Naive thymus-derived CD4-positive, alpha-beta T cell (primary cell): ENCODE measurements at regions of chr10 and their contacts with region 1.

Region 1: DNA sequence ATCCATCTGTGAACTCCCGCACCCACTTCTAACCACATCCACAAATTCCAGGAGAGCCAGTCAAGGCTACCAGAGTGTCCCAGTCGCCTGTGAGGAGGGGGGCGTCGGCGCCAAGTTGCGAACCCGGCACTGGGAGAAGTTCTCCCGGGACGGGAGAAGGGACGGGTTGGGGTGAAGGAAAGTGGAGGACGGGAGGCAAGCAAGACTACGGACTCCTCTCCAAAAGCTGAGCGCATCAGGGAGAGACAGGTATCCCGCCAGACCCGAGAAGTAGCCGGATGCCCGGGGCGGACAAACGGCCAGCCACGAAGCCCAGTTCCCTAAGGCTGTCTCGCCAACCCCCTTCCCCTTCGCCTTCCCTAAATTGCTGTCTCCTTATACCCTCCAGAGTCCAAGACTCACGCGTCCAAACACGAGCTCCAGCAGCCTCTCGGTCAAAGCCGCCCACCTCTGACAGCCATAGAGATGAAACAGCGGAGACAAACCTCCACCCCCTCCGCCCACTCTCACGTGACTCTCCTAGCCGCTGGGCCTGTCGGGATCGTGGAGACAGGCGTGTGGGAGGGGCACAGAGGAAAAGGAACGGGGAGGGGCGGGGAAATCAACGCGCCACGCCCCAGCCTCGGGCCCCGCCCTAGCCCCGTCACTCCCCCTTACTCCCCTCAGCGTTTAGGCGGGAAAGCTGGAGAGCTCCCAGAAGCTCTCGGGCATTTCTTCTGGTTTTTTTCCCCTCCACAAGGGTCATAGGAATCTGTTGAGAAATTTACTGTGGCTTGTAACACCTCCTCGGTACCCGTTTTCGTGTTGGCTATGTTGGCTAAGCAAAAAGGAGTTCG is at the start of gene MICU1:
- DNase-seq: peak; percentile 74 to 93 (median 90)
- ATAC-seq: peak; percentile 100
- H3K4me3 ChIP-seq: peak within 1 kb of the TSS; percentile 97
- H3K4me3 Mint-ChIP-seq: peak within 1 kb of the TSS; percentile 97 to 100 (median 100)
- H3K27ac ChIP-seq: peak within 1 kb of the TSS; percentile 76
- H3K27ac Mint-ChIP-seq: peak within 1 kb of the TSS; percentile 83 to 99 (median 97)
- H3K4me1 ChIP-seq: peaks cover 11 to 16% of the 10 kb centered on the region in 2 donors
- H3K4me1 Mint-ChIP-seq: peaks cover 11 to 28% (median 16%) of the 10 kb centered on the region in 7 donors
- H3K27me3 ChIP-seq: no peaks in the 10 kb centered on the region
- H3K27me3 Mint-ChIP-seq: peaks cover 0 to 8% (median 0%) of the 10 kb centered on the region in 5 donors
- total RNA-seq, gene MICU1: 20.8 to 39.6 (median 26.3) TPM

Region 2: DNA sequence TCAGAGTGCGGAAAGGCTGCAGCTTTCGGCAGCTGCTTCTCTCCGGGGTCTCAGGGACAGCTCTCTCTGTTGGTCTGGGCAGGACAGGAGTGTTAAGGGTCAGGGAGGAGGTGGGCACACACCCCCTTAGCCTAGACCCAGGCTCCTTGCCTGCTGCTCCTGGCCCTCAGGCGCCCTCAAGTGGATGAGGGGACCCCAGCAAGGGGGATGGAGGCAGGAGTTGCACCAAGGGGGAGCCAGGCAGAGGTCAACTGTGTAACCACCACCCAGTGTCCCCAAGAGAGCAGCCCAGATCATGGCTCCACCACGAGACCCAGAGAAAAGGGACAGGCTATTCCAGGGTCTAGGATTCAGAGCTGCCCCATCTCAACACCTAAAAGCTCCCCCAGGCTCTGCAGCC is 564.3 kb before region 1 on chr10:
- CTCF ChIA-PET with region 1: no interaction called
- POLR2A ChIA-PET with region 1: no interaction called
- intact Hi-C with region 1: no loop called
- DNase-seq: no peak
- ATAC-seq: peak; percentile 22
- H3K4me3 ChIP-seq: no peak overlapping the region
- H3K4me3 Mint-ChIP-seq: peak overlapping the region in 2 of 10 donors; percentile 32 to 66
- H3K27ac ChIP-seq: no peak overlapping the region
- H3K27ac Mint-ChIP-seq: peak overlapping the region; percentile 34 to 91 (median 80)
- H3K4me1 ChIP-seq: no peaks in the 10 kb centered on the region
- H3K4me1 Mint-ChIP-seq: peaks cover 0 to 37% (median 24%) of the 10 kb centered on the region in 7 donors
- H3K27me3 ChIP-seq: no peaks in the 10 kb centered on the region
- H3K27me3 Mint-ChIP-seq: no peaks in the 10 kb centered on the region

Region 3: DNA sequence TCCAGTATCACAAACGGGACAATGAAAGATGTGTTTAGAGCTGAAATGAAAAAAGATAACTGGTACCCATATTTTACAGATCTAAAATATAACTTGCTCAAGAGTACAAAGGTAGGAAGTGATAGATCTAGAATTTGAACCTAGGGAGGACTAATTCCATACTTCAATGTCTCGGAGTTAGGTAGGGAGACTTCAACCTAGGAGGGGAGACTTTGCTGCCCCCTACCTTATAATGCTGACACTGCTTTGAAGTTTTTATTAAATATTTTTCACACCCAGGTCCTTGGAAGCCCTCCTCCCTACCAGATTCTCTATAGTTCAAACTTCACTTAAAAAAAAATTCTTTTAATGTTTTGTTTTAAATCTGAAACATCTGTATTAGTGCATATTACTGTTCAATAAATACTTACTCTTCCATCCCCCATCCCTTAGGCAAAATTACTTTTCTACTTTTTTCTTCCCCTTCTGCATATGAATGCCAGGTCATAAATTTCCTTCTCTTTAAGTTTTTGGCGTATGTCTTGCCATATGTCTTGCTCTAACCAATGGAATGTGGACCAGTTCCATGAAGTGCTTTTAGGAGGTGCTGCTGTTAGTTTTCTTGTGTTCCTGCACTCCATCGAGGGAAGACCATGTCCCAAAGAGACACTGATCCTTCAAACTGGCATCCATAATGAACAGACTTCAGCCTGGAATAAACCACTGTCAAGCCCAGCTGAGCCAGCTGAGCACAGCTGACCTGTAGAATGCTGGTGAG is 57.8 kb before region 1 on chr10:
- CTCF ChIA-PET with region 1: no interaction called
- POLR2A ChIA-PET with region 1: no interaction called
- intact Hi-C with region 1: loop called (anchors 5 kb)
- DNase-seq: no peak
- ATAC-seq: no peak
- H3K4me3 ChIP-seq: no peak overlapping the region
- H3K4me3 Mint-ChIP-seq: no peak overlapping the region
- H3K27ac ChIP-seq: no peak overlapping the region
- H3K27ac Mint-ChIP-seq: peak overlapping the region in 1 of 9 donors; percentile 12
- H3K4me1 ChIP-seq: peaks cover 0 to 4% of the 10 kb centered on the region in 2 donors
- H3K4me1 Mint-ChIP-seq: peaks cover 5 to 19% (median 12%) of the 10 kb centered on the region in 7 donors
- H3K27me3 ChIP-seq: no peaks in the 10 kb centered on the region
- H3K27me3 Mint-ChIP-seq: no peaks in the 10 kb centered on the region

Region 4: GRCh38 chr10:73159038-73159648 is 533.3 kb after region 1 on chr10:
- CTCF ChIA-PET with region 1: no interaction called
- POLR2A ChIA-PET with region 1: no interaction called
- intact Hi-C with region 1: loop called in 1 of 2 experiments (anchors 2 kb)
- DNase-seq: peak in 8 of 9 donors; percentile 33 to 67 (median 58)
- ATAC-seq: peak; percentile 86
- H3K4me3 ChIP-seq: no peak overlapping the region
- H3K4me3 Mint-ChIP-seq: peak overlapping the region in 1 of 10 donors; percentile 16
- H3K27ac ChIP-seq: no peak overlapping the region
- H3K27ac Mint-ChIP-seq: peak overlapping the region in 3 of 9 donors; percentile 22 to 74 (median 42)
- H3K4me1 ChIP-seq: peaks cover 9 to 10% of the 10 kb centered on the region in 2 donors
- H3K4me1 Mint-ChIP-seq: peaks cover 27 to 44% (median 39%) of the 10 kb centered on the region in 7 donors
- H3K27me3 ChIP-seq: no peaks in the 10 kb centered on the region
- H3K27me3 Mint-ChIP-seq: no peaks in the 10 kb centered on the region

Region 5: GRCh38 chr10:73246783-73247508 is 621.1 kb after region 1 on chr10 and contains the start of gene DNAJC9:
- CTCF ChIA-PET with region 1: no interaction called
- POLR2A ChIA-PET with region 1: no interaction called
- intact Hi-C with region 1: loop called in 1 of 2 experiments (anchors 1 kb)
- DNase-seq: peak; percentile 93 to 98 (median 96)
- ATAC-seq: peak; percentile 95
- H3K4me3 ChIP-seq: peak within 1 kb of the TSS; percentile 71
- H3K4me3 Mint-ChIP-seq: peak within 1 kb of the TSS; percentile 92 to 100 (median 97)
- H3K27ac ChIP-seq: peak within 1 kb of the TSS; percentile 86
- H3K27ac Mint-ChIP-seq: peak within 1 kb of the TSS; percentile 91 to 98 (median 96)
- H3K4me1 ChIP-seq: peaks cover 27 to 37% of the 10 kb centered on the region in 2 donors
- H3K4me1 Mint-ChIP-seq: peaks cover 30 to 69% (median 55%) of the 10 kb centered on the region in 7 donors
- H3K27me3 ChIP-seq: no peaks in the 10 kb centered on the region
- H3K27me3 Mint-ChIP-seq: no peaks in the 10 kb centered on the region
- total RNA-seq, gene DNAJC9: 14.5 to 47.7 (median 26.8) TPM